HEK293T (cell line): ENCODE measurements at regions of chr9 and their contacts with region 1.

Region 1: DNA sequence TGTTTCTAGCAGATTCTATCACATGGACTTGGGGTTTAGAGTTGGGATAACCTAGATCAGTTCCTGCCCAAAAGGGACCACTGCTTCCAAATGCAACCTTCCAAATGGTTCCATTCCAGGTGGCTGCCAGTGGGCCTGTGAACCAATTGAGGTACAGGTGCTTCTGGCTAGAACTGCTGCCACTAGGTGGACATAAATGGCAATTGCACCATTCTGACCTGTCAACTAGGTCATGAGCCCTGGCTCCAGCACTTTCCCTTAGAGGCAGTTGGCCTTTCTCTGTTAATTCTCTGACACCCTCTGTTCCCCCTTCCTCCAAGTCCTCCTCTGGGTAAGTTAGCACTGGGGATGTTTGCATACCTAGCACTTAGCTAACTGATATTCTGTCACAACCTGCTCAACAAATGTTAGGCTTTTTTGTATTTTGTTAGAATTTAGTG is 16.6 kb upstream of the HEMGN start:
- DNase-seq: peak; percentile 72

Region 2: GRCh38 chr9:97703437-97704344 is 250.9 kb before region 1 on chr9:
- CTCF ChIA-PET with region 1: interaction called, 10 read pairs
- POLR2A ChIA-PET with region 1: no interaction called
- DNase-seq: no peak